ENCODE measurements at regions of chr2 and their contacts with region 1.

Region 1: GRCh38 chr2:27489498-27490397 is at the start of gene IFT172:
- DNase-seq: peak; percentile 100
- H3K4me3 ChIP-seq: peak within 1 kb of the TSS in 2 of 3 donors; percentile 22 to 31
- H3K27ac ChIP-seq: peak within 1 kb of the TSS; percentile 63 to 79 (median 78)
- H3K4me1 ChIP-seq: peaks cover 6 to 11% of the 10 kb centered on the region in 2 donors
- H3K27me3 ChIP-seq: no peaks in the 10 kb centered on the region
- CTCF ChIP-seq: no peak
- POLR2A ChIP-seq: peak; percentile 53 to 95
- total RNA-seq, gene IFT172: 30.9 to 56.8 (median 43.7) TPM

Region 2: DNA sequence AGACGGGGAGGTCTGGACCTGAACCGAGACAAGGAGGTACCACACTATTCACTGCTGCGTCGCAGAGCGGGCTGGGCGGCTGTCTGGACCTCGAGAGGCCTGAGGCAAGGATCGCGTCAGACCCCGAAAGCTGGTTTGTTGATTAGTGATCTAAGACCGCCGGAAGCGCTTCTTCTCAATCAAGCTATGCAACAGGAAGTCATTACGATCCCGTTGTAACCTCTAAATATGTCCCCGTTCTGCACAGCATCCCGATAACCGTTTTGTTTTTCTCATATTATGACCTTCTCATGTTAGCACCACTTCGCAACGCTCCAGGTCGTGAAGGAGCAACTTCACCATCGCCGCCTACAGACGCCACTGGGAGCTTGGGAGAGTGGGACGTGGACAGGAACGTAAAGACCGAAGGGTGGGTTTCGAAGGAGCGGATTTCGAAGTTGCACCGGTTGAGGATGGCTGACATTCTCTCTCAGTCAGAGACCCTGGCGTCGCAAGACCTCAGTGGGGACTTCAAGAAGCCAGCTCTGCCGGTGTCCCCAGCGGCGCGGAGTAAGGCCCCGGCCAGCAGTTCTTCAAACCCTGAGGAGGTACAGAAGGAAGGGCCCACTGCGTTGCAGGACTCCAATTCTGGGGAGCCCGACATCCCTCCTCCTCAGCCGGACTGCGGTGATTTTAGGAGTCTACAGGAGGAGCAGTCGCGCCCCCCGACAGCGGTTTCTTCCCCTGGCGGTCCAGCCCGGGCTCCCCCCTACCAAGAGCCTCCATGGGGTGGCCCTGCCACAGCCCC is 173.9 kb after region 1 on chr2 and contains the starts of genes SLC4A1AP and SUPT7L:
- intact Hi-C with region 1: loop called (anchors 10 kb)
- DNase-seq: peak; percentile 61 to 62
- H3K4me3 ChIP-seq: peak within 1 kb of the TSS; percentile 62 to 84 (median 68)
- H3K27ac ChIP-seq: peak within 1 kb of the TSS; percentile 54 to 89 (median 88)
- H3K4me1 ChIP-seq: peaks cover 16 to 17% of the 10 kb centered on the region in 2 donors
- H3K27me3 ChIP-seq: no peaks in the 10 kb centered on the region
- CTCF ChIP-seq: peak in 1 of 6 experiments; percentile 12
- POLR2A ChIP-seq: no peak
- total RNA-seq, gene SLC4A1AP: 16.5 to 26.6 (median 23.4) TPM
- total RNA-seq, gene SUPT7L: 24.9 to 38.1 (median 29.6) TPM

Measured in thyroid gland (tissue), 4 donors.